CD4-positive, alpha-beta memory T cell (primary cell): ENCODE measurements at regions of chr14 and their contacts with region 1.

Region 1: DNA sequence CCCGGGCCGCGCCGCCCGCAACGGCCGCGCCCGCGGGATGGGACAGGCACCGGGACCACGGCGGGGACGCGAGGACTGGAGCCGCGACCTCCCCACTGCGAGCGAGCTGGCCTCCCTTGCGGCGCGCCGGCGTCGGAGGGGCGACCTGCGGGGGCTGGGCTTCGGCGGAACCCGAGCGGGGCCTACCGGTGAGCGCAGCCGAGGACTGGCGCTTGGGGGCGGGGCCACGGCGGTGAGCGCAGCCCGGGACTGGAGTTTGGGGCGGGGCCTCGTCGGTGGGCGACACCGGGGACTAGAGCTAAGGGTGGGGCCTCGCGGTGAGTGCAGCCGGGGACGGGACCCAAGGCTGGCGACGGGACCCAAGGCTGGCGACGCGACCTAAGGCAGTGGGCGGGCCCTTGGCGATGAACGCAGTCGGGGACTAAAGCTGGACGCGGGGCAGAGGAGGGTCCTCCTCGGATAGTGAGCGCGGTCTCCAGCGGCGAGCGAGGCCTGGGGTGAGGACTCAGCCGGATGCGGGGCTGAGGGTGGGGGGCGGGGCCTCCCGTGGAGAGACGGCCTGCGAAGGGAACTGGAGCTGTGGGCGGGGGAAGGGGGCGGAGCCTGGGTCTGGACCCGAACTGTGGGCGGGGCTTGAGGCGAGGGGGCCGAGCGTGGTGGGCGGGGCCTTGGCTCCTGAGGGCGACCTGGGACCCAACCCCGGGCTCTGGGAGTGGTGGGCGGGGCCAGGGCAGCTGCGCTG is at the start of gene BRF1:
- DNase-seq: peak; percentile 97 to 99 (median 98)
- H3K4me3 ChIP-seq: peak within 1 kb of the TSS; percentile 65 to 80
- H3K4me3 Mint-ChIP-seq: peak within 1 kb of the TSS; percentile 88 to 95 (median 90)
- H3K27ac ChIP-seq: peak within 1 kb of the TSS; percentile 63
- H3K27ac Mint-ChIP-seq: peak within 1 kb of the TSS; percentile 80 to 98 (median 95)
- H3K4me1 ChIP-seq: peaks cover 23% of the 10 kb centered on the region
- H3K4me1 Mint-ChIP-seq: peaks cover 22 to 48% (median 30%) of the 10 kb centered on the region in 4 donors
- H3K27me3 ChIP-seq: no peaks in the 10 kb centered on the region
- H3K27me3 Mint-ChIP-seq: no peaks in the 10 kb centered on the region
- total RNA-seq, gene BRF1: 49.7 to 56.0 TPM

Region 2: GRCh38 chr14:105180592-105181548 is 120.1 kb before region 1 on chr14 and contains the start of gene NUDT14:
- CTCF ChIA-PET with region 1: no interaction called
- POLR2A ChIA-PET with region 1: interaction called, 7 read pairs
- intact Hi-C with region 1: loop called (anchors 5 kb)
- DNase-seq: peak; percentile 78 to 86 (median 82)
- H3K4me3 ChIP-seq: peak within 1 kb of the TSS in 1 of 2 donors; percentile 32
- H3K4me3 Mint-ChIP-seq: peak within 1 kb of the TSS; percentile 73 to 85 (median 77)
- H3K27ac ChIP-seq: no peak within 1 kb of the TSS
- H3K27ac Mint-ChIP-seq: peak within 1 kb of the TSS in 6 of 7 donors; percentile 31 to 89 (median 46)
- H3K4me1 ChIP-seq: peaks cover 28% of the 10 kb centered on the region
- H3K4me1 Mint-ChIP-seq: peaks cover 1 to 21% (median 8%) of the 10 kb centered on the region in 4 donors
- H3K27me3 ChIP-seq: no peaks in the 10 kb centered on the region
- H3K27me3 Mint-ChIP-seq: no peaks in the 10 kb centered on the region
- total RNA-seq, gene NUDT14: 17.4 to 18.0 TPM

Region 3: GRCh38 chr14:105257464-105257863 is 43.5 kb before region 1 on chr14:
- CTCF ChIA-PET with region 1: no interaction called
- POLR2A ChIA-PET with region 1: interaction called, 5 read pairs
- intact Hi-C with region 1: loop called (anchors 1 kb)
- DNase-seq: peak; percentile 27 to 51 (median 32)
- H3K4me3 ChIP-seq: no peak overlapping the region
- H3K4me3 Mint-ChIP-seq: peak overlapping the region in 6 of 8 donors; percentile 2 to 53 (median 24)
- H3K27ac ChIP-seq: no peak overlapping the region
- H3K27ac Mint-ChIP-seq: peak overlapping the region in 6 of 7 donors; percentile 18 to 86 (median 65)
- H3K4me1 ChIP-seq: peaks cover 10% of the 10 kb centered on the region
- H3K4me1 Mint-ChIP-seq: peaks cover 8 to 16% (median 11%) of the 10 kb centered on the region in 4 donors
- H3K27me3 ChIP-seq: no peaks in the 10 kb centered on the region
- H3K27me3 Mint-ChIP-seq: no peaks in the 10 kb centered on the region

Region 4: GRCh38 chr14:105351920-105352851 is 51.2 kb after region 1 on chr14:
- CTCF ChIA-PET with region 1: interaction called, 3 read pairs
- POLR2A ChIA-PET with region 1: interaction called, 3 read pairs
- intact Hi-C with region 1: loop called (anchors 2 kb)
- DNase-seq: peak; percentile 84 to 86 (median 85)
- H3K4me3 ChIP-seq: no peak overlapping the region
- H3K4me3 Mint-ChIP-seq: no peak overlapping the region
- H3K27ac ChIP-seq: no peak overlapping the region
- H3K27ac Mint-ChIP-seq: peak overlapping the region in 3 of 7 donors; percentile 46 to 70 (median 48)
- H3K4me1 ChIP-seq: no peaks in the 10 kb centered on the region
- H3K4me1 Mint-ChIP-seq: peaks cover 3 to 4% (median 3%) of the 10 kb centered on the region in 4 donors
- H3K27me3 ChIP-seq: no peaks in the 10 kb centered on the region
- H3K27me3 Mint-ChIP-seq: no peaks in the 10 kb centered on the region

Region 5: GRCh38 chr14:105439691-105440553 is 139.0 kb after region 1 on chr14:
- CTCF ChIA-PET with region 1: no interaction called
- POLR2A ChIA-PET with region 1: no interaction called
- intact Hi-C with region 1: no loop called
- DNase-seq: no peak
- H3K4me3 ChIP-seq: no peak overlapping the region
- H3K4me3 Mint-ChIP-seq: no peak overlapping the region
- H3K27ac ChIP-seq: no peak overlapping the region
- H3K27ac Mint-ChIP-seq: no peak overlapping the region
- H3K4me1 ChIP-seq: no peaks in the 10 kb centered on the region
- H3K4me1 Mint-ChIP-seq: peaks cover 9 to 19% (median 14%) of the 10 kb centered on the region in 4 donors
- H3K27me3 ChIP-seq: no peaks in the 10 kb centered on the region
- H3K27me3 Mint-ChIP-seq: no peaks in the 10 kb centered on the region